ENCODE measurements at regions of chr7 and their contacts with region 1.

Region 1: DNA sequence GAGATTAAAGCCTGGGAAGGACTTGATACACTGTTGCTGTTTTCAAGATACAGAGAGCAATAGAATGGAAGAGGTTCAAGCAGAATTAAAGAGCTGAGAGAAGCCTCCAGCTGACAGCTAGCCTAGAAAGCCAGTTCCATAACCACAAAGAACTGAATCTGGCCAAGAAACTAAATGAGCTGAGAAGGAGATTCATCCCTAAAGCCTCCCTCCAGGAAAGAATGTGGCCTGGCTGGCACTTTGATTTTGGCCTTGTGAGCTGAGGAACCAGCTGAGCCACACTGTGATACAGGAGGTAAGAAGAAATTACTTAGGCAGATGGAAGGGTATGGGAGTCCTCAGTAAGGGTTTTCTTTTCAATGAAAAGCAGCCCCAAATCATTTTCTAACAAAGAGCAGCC is 324.1 kb downstream of the PHF14 start:
- DNase-seq: no peak
- ATAC-seq: no peak
- H3K4me3 ChIP-seq: no peak overlapping the region
- H3K27ac ChIP-seq: no peak overlapping the region
- H3K4me1 ChIP-seq: no peaks in the 10 kb centered on the region
- H3K27me3 ChIP-seq: no peaks in the 10 kb centered on the region
- CTCF ChIP-seq: no peak
- POLR2A ChIP-seq: no peak
- RAD21 ChIP-seq: no peak

Region 2: GRCh38 chr7:11228515-11228914 is 69.2 kb before region 1 on chr7:
- CTCF ChIA-PET with region 1: no interaction called
- POLR2A ChIA-PET with region 1: no interaction called
- RAD21 ChIA-PET with region 1: no interaction called
- intact Hi-C with region 1: loop called (anchors 1 kb)
- DNase-seq: no peak
- ATAC-seq: no peak
- H3K4me3 ChIP-seq: no peak overlapping the region
- H3K27ac ChIP-seq: no peak overlapping the region
- H3K4me1 ChIP-seq: no peaks in the 10 kb centered on the region
- H3K27me3 ChIP-seq: no peaks in the 10 kb centered on the region; the same call in 1 of the 2 replicates
- CTCF ChIP-seq: no peak
- POLR2A ChIP-seq: no peak
- RAD21 ChIP-seq: no peak

Region 3: DNA sequence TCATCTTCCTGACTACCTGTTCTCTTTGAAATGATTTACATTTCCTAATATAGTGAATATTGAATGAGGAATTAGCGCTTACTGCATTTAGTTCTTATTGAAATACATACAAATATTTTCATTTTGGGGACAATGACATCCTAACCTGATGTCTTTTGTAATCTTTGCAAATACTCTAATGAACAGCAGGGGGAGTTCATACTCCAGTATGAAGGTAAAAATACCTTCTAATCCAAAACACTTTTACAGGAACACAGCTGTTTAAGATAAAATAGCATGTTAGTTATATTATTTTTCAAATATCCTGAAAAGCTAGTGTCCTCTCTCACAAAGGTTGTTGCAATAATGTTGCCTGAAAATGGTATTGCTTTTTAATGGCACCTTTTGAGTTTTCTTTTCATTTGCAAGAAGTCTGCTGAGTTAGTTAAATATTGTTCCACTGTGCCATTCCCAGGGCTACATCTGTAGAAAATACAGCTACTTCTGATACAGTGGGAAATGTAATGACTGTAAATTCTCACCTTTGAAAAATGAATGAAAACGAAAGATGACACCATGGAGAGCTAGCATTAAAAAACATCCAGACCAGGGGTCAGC is 75.9 kb after region 1 on chr7:
- CTCF ChIA-PET with region 1: no interaction called
- POLR2A ChIA-PET with region 1: no interaction called
- RAD21 ChIA-PET with region 1: no interaction called
- intact Hi-C with region 1: loop called (anchors 10 kb)
- DNase-seq: peak; percentile 23
- ATAC-seq: peak; percentile 68
- H3K4me3 ChIP-seq: no peak overlapping the region
- H3K27ac ChIP-seq: no peak overlapping the region
- H3K4me1 ChIP-seq: no peaks in the 10 kb centered on the region
- H3K27me3 ChIP-seq: no peaks in the 10 kb centered on the region
- CTCF ChIP-seq: peak; percentile 37 to 65 (median 60); a peak in 5 of 6 replicates
- POLR2A ChIP-seq: no peak
- RAD21 ChIP-seq: peak; percentile 63

Measured in HCT116 (cell line).